Activated CD4-positive, alpha-beta memory T cell treated with anti-CD3 and anti-CD28 coated beads for 36 hours (primary cell): ENCODE measurements at regions of chr22 and their contacts with region 1.

Region 1: GRCh38 chr22:46604306-46604690 is 15.9 kb upstream of the GRAMD4 start:
- DNase-seq: peak; percentile 91
- H3K4me3 Mint-ChIP-seq: peak overlapping the region; percentile 71
- H3K27ac Mint-ChIP-seq: peak overlapping the region; percentile 97
- H3K4me1 Mint-ChIP-seq: peaks cover 15% of the 10 kb centered on the region
- H3K27me3 Mint-ChIP-seq: no peaks in the 10 kb centered on the region

Region 2: DNA sequence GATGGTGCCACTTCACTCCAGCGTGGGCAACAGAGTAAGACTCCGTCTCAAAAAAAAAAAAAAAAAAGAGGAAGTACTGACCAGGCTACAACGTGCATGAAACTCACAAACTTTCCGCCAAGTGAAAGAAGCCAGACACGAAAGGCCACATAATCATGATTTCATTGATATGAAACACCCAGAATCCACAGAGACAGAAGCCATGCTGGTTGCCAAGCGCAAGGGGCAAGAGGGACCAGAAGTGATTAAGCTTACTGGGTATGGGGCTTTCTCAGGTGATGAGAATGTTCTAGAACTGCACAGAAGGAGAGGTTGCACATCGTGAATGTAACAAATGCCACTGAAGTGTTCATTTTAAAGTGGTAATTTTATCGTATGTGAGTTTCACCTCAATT is 127.8 kb before region 1 on chr22:
- CTCF ChIA-PET with region 1: no interaction called
- POLR2A ChIA-PET with region 1: no interaction called
- intact Hi-C with region 1: no loop called
- DNase-seq: peak; percentile 14
- H3K4me3 Mint-ChIP-seq: no peak overlapping the region
- H3K27ac Mint-ChIP-seq: no peak overlapping the region
- H3K4me1 Mint-ChIP-seq: peaks cover 5% of the 10 kb centered on the region
- H3K27me3 Mint-ChIP-seq: peaks cover 10% of the 10 kb centered on the region

Region 3: DNA sequence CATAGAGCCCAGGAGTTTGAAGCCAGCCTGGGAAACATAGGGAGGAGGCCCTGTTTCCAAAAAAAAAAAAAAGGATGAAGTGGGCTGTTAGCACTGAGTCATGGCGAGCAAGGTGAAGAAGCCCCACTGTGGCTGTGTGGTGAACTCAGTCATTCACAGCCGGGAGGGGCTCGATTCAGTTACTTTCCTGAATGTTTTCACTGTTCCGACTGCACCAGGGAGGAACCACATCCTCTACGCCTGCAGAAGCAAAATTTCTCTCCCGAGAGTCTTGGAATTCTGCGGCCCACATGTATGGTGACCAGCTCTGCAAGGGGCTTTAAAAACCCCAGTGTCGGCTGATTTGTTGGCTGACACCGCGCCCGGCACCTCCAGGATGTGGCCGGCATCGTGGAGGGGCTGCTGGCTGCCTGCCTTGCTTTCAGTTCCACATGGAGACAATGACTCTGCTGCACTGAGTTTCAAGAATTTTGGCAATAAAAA is 11.9 kb before region 1 on chr22:
- CTCF ChIA-PET with region 1: no interaction called
- POLR2A ChIA-PET with region 1: no interaction called
- intact Hi-C with region 1: loop called (anchors 1 kb)
- DNase-seq: peak; percentile 70
- H3K4me3 Mint-ChIP-seq: peak overlapping the region; percentile 56
- H3K27ac Mint-ChIP-seq: peak overlapping the region; percentile 47
- H3K4me1 Mint-ChIP-seq: peaks cover 25% of the 10 kb centered on the region
- H3K27me3 Mint-ChIP-seq: no peaks in the 10 kb centered on the region

Region 4: GRCh38 chr22:46635756-46636155 is 31.5 kb after region 1 on chr22:
- CTCF ChIA-PET with region 1: no interaction called
- POLR2A ChIA-PET with region 1: no interaction called
- intact Hi-C with region 1: no loop called
- DNase-seq: no peak
- H3K4me3 Mint-ChIP-seq: no peak overlapping the region
- H3K27ac Mint-ChIP-seq: no peak overlapping the region
- H3K4me1 Mint-ChIP-seq: no peaks in the 10 kb centered on the region
- H3K27me3 Mint-ChIP-seq: no peaks in the 10 kb centered on the region